ENCODE measurements at regions of chr22 and their contacts with region 1.

Region 1: DNA sequence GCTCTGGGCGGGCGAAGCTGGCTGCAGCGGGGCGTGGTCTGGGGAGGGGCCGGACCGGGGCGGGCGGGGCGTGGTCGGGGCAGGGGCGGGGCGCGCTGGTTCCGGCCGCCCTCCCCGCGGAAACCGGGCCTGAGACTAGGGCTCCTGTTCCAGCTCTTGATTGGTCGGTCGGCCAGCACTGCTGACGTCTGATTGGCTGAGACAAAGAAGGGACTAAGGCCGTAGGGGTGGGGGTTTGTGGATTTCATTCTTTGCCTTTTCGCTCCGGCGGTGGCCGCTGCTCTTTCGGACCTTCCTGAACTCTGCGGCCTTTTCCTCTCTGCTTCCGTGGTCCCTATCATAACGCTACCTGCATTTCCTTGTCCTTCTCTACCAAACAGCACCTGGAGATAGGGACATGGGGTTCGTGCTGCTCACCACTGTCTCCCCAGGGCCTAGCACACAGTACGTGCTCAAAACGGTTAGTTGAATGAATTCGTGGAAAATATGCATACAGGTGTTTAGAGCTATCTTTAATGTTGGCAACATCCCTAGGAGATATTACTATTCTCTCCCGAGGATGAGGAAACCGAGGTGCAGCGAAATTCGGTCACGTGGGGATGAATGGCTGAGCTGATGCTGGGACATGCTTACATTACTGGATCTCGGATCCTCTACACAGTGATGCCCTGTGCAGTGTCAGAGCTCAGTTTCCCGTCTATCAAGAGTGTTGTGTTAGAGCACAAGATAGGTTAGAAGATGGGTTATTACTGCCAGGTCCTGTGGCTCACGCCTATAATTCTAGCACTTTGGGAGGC is 62.8 kb downstream of the NFAM1 start:
- DNase-seq: peak; percentile 94 to 99 (median 97)

Region 2: GRCh38 chr22:42090596-42091454 is 278.6 kb before region 1 on chr22 and contains the start of gene NDUFA6:
- intact Hi-C with region 1: loop called (anchors 5 kb)
- DNase-seq: peak; percentile 97 to 100 (median 99)

Region 3: GRCh38 chr22:42353883-42354727 is 15.3 kb before region 1 on chr22:
- intact Hi-C with region 1: no loop called
- DNase-seq: no peak